ENCODE measurements at regions of chr1 and their contacts with region 1.

Region 1: DNA sequence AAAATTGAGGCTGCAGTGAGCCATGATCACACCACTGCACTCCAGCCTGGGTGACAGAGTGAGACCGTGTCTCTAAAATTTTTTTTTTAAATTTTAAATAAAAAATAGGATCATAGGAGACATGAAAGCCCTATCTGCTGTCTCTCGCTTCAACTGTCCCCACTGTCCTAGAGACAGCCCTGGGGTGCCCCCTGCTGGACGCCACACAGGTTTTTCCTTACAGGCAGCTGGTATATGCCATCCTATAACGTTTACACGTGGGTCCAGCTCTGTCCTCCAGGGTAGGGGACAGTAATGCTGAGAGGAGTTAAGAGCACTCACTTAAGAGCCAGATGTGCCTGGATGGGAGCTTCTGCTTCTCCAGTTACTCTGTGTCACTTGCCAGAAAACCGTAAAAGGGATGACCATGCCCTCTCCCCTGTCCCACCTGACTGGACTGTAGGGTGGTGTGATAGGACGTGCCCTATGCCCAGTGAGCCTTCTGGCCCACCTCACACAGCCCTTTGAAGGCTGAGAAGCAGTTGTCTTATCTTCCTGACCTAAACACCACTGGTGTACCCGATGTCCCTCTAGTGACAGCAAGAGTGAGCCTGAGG is 8.5 kb downstream of the FBXO2 start:
- DNase-seq: peak; percentile 71 to 90 (median 78)
- ATAC-seq: peak; percentile 59
- H3K4me3 ChIP-seq: no peak overlapping the region
- H3K4me3 Mint-ChIP-seq: no peak overlapping the region
- H3K27ac ChIP-seq: no peak overlapping the region
- H3K27ac Mint-ChIP-seq: no peak overlapping the region
- H3K4me1 ChIP-seq: peaks cover 26% of the 10 kb centered on the region
- H3K4me1 Mint-ChIP-seq: peaks cover 19% of the 10 kb centered on the region
- H3K27me3 ChIP-seq: no peaks in the 10 kb centered on the region
- H3K27me3 Mint-ChIP-seq: peaks cover 5% of the 10 kb centered on the region
- CTCF ChIP-seq: peak; percentile 75

Region 2: GRCh38 chr1:11337580-11338073 is 308.1 kb before region 1 on chr1:
- CTCF ChIA-PET with region 1: interaction called, 3 read pairs
- POLR2A ChIA-PET with region 1: no interaction called
- intact Hi-C with region 1: loop called (anchors 1 kb)
- DNase-seq: peak; percentile 55 to 81 (median 66)
- ATAC-seq: peak; percentile 74
- H3K4me3 ChIP-seq: no peak overlapping the region
- H3K4me3 Mint-ChIP-seq: no peak overlapping the region
- H3K27ac ChIP-seq: no peak overlapping the region
- H3K27ac Mint-ChIP-seq: no peak overlapping the region
- H3K4me1 ChIP-seq: peaks cover 5% of the 10 kb centered on the region
- H3K4me1 Mint-ChIP-seq: peaks cover 16% of the 10 kb centered on the region
- H3K27me3 ChIP-seq: peaks cover 0 to 11% of the 10 kb centered on the region in 2 experiments
- H3K27me3 Mint-ChIP-seq: peaks cover 14% of the 10 kb centered on the region
- CTCF ChIP-seq: peak; percentile 86

Region 3: DNA sequence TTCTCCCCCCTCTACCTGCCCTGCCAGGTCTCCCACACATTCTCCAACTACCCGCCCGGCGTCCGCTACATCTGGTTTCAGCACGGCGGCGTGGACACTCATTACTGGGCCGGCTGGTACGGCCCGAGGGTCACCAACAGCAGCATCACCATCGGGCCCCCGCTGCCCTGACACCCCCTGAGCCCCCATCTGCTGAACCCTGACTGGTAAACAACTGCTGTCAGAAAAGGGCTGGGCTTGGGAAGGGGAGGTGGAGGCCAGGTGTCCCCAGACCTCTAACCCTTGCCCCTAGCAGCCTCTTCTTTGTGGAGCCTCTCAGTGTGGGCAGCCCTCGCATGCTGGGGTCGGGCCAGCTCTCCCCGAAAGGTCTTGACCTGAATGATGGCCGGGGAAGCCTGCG is 15.3 kb after region 1 on chr1:
- CTCF ChIA-PET with region 1: interaction called, 33 read pairs
- POLR2A ChIA-PET with region 1: interaction called, 18 read pairs
- intact Hi-C with region 1: no loop called
- DNase-seq: no peak
- ATAC-seq: no peak
- H3K4me3 ChIP-seq: no peak overlapping the region
- H3K4me3 Mint-ChIP-seq: peak overlapping the region; percentile 11
- H3K27ac ChIP-seq: no peak overlapping the region
- H3K27ac Mint-ChIP-seq: no peak overlapping the region
- H3K4me1 ChIP-seq: peaks cover 20% of the 10 kb centered on the region
- H3K4me1 Mint-ChIP-seq: peaks cover under 1% of the 10 kb centered on the region
- H3K27me3 ChIP-seq: no peaks in the 10 kb centered on the region
- H3K27me3 Mint-ChIP-seq: no peaks in the 10 kb centered on the region
- CTCF ChIP-seq: no peak

Region 4: DNA sequence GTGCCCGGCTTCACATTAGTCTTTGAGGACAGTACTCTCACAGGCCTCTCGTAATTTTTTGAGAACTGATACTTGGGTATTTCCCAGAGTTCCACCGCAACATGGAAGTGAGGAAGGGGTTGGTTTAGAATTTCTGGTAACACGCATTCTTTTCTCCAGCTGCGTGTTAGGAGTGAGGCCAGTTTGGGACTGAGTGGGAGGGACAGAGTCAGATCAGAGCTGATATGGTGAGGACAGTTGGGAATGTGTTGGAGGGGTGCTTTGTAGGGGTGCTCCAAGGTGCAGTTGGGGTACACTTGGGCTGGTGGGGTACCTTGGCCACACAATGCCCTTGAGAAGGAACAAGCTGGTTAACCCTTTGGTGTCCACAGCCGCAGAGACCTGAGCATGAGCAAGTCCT is 25.0 kb after region 1 on chr1:
- CTCF ChIA-PET with region 1: interaction called, 33 read pairs
- POLR2A ChIA-PET with region 1: no interaction called
- intact Hi-C with region 1: no loop called
- DNase-seq: peak in 2 of 14 experiments; percentile 38 to 45
- ATAC-seq: no peak
- H3K4me3 ChIP-seq: no peak overlapping the region
- H3K4me3 Mint-ChIP-seq: no peak overlapping the region
- H3K27ac ChIP-seq: no peak overlapping the region
- H3K27ac Mint-ChIP-seq: no peak overlapping the region
- H3K4me1 ChIP-seq: no peaks in the 10 kb centered on the region
- H3K4me1 Mint-ChIP-seq: no peaks in the 10 kb centered on the region
- H3K27me3 ChIP-seq: no peaks in the 10 kb centered on the region
- H3K27me3 Mint-ChIP-seq: no peaks in the 10 kb centered on the region
- CTCF ChIP-seq: no peak

Region 5: GRCh38 chr1:11749203-11749689 is 103.5 kb after region 1 on chr1:
- CTCF ChIA-PET with region 1: no interaction called
- POLR2A ChIA-PET with region 1: no interaction called
- intact Hi-C with region 1: loop called (anchors 1 to 2 kb)
- DNase-seq: peak in 13 of 14 experiments; percentile 28 to 77 (median 43)
- ATAC-seq: peak; percentile 99
- H3K4me3 ChIP-seq: no peak overlapping the region
- H3K4me3 Mint-ChIP-seq: no peak overlapping the region
- H3K27ac ChIP-seq: no peak overlapping the region
- H3K27ac Mint-ChIP-seq: peak overlapping the region; percentile 24
- H3K4me1 ChIP-seq: peaks cover 15% of the 10 kb centered on the region
- H3K4me1 Mint-ChIP-seq: peaks cover 7% of the 10 kb centered on the region
- H3K27me3 ChIP-seq: no peaks in the 10 kb centered on the region
- H3K27me3 Mint-ChIP-seq: no peaks in the 10 kb centered on the region
- CTCF ChIP-seq: peak; percentile 71

Region 6: DNA sequence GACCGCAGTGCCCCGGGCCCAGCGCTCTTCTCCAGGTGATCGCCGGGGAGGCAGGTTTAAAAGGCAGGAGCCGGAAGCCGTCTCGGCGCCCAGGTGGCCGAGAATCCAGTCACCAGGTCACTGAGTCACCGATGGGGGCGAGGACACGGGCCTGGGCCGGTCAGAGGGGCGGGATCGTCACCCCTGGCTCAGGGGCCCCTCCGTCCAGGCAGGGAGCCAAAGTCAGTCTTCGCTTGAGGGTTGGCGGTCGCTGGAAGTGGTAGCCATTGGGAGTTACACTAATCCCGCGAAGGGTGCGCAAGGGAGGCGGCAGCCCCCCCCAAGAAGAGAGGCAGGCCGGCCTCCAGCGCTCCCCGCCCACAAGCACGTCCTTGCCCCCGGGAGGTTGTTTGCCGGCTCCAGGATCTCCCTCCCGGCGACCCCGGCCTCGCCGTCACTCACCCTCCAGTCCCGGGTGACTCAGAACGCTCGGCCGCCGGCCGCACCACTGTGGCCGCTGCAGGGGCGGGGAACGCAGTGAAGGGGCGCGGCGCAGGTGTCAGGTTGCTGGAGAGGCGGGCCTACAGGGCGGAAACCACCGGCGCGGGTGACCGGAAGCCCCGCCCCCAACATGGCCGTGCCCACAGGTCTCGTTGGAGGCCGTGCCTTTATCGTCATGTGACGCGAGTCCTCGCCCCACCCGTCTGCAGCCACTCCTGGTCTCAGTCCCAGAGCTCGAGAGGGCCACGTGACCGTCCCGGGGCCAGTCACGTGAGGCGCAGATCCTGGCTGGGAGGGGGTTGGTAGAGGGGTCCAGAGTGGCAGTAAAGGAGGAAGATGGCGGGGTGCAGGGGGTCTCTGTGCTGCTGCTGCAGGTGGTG is 159.9 kb after region 1 on chr1 and contains the starts of genes CLCN6 and MTHFR:
- CTCF ChIA-PET with region 1: interaction called, 4 read pairs
- POLR2A ChIA-PET with region 1: no interaction called
- intact Hi-C with region 1: loop called in 1 of 2 experiments (anchors 5 kb)
- DNase-seq: peak; percentile 93 to 99 (median 97)
- ATAC-seq: peak; percentile 85
- H3K4me3 ChIP-seq: peak within 1 kb of the TSS; percentile 98
- H3K4me3 Mint-ChIP-seq: peak within 1 kb of the TSS; percentile 99
- H3K27ac ChIP-seq: peak within 1 kb of the TSS; percentile 86 to 92
- H3K27ac Mint-ChIP-seq: peak within 1 kb of the TSS; percentile 91
- H3K4me1 ChIP-seq: peaks cover 58% of the 10 kb centered on the region
- H3K4me1 Mint-ChIP-seq: peaks cover 66% of the 10 kb centered on the region
- H3K27me3 ChIP-seq: no peaks in the 10 kb centered on the region
- H3K27me3 Mint-ChIP-seq: no peaks in the 10 kb centered on the region
- CTCF ChIP-seq: no peak
- total RNA-seq, gene CLCN6: 10.9 to 11.2 TPM
- total RNA-seq, gene MTHFR: 30.8 to 31.3 TPM

Region 7: DNA sequence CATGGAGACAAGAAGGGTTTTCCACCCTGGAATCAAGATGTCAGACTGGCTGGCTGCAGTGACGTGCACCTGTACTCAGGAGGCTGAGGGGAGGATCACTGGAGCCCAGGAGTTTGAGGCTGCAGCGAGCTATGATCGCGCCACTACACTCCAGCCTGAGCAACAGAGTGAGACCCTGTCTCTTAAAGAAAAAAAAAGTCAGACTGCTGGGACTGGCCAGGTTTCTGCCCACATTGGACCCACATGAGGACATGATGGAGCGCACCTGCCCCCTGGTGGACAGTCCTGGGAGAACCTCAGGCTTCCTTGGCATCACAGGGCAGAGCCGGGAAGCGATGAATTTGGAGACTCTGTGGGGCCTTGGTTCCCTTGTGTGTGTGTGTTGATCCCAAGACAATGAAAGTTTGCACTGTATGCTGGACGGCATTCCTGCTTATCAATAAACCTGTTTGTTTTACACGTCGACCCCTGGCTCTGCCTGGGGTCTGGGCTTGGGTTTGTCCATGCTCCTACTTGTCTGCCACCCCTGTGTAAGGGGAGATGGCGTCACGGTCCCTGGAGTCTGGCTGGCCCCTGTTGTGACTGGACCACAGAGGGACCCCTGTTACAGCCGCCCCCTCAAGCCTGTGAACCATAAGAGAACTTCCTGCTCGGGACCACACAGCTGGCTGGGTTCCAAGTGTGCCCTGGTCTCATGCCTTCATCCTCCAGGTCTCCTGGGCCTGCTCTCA is 563.2 kb after region 1 on chr1:
- CTCF ChIA-PET with region 1: no interaction called
- POLR2A ChIA-PET with region 1: no interaction called
- intact Hi-C with region 1: no loop called
- DNase-seq: peak; percentile 75 to 93 (median 85)
- ATAC-seq: peak; percentile 73
- H3K4me3 ChIP-seq: no peak overlapping the region
- H3K4me3 Mint-ChIP-seq: peak overlapping the region; percentile 21
- H3K27ac ChIP-seq: peak overlapping the region; percentile 29 to 49
- H3K27ac Mint-ChIP-seq: peak overlapping the region; percentile 83
- H3K4me1 ChIP-seq: peaks cover 55% of the 10 kb centered on the region
- H3K4me1 Mint-ChIP-seq: peaks cover 56% of the 10 kb centered on the region
- H3K27me3 ChIP-seq: no peaks in the 10 kb centered on the region
- H3K27me3 Mint-ChIP-seq: no peaks in the 10 kb centered on the region
- CTCF ChIP-seq: peak; percentile 96